ENCODE measurements at regions of chr2 and their contacts with region 1.

Region 1: GRCh38 chr2:71068218-71069035 is at the start of gene NAGK:
- DNase-seq: peak; percentile 97 to 98 (median 98)
- H3K4me3 ChIP-seq: peak within 1 kb of the TSS; percentile 69 to 95 (median 89)
- H3K27ac ChIP-seq: peak within 1 kb of the TSS; percentile 89
- H3K4me1 ChIP-seq: peaks cover 32 to 84% (median 69%) of the 10 kb centered on the region in 4 experiments
- H3K27me3 ChIP-seq: no peaks in the 10 kb centered on the region

Region 2: GRCh38 chr2:71042287-71042686 is 26.1 kb before region 1 on chr2:
- CTCF ChIA-PET with region 1: no interaction called
- POLR2A ChIA-PET with region 1: no interaction called
- DNase-seq: no peak
- H3K4me3 ChIP-seq: no peak overlapping the region
- H3K27ac ChIP-seq: no peak overlapping the region
- H3K4me1 ChIP-seq: peaks cover 0 to 2% (median 0%) of the 10 kb centered on the region in 4 experiments
- H3K27me3 ChIP-seq: no peaks in the 10 kb centered on the region

Region 3: GRCh38 chr2:71100195-71100964 is 32.0 kb after region 1 on chr2:
- CTCF ChIA-PET with region 1: interaction called, 42 read pairs
- POLR2A ChIA-PET with region 1: interaction called, 7 read pairs
- DNase-seq: peak; percentile 56 to 68 (median 60)
- H3K4me3 ChIP-seq: no peak overlapping the region
- H3K27ac ChIP-seq: no peak overlapping the region
- H3K4me1 ChIP-seq: peaks cover 0 to 11% (median 6%) of the 10 kb centered on the region in 4 experiments
- H3K27me3 ChIP-seq: no peaks in the 10 kb centered on the region

Region 4: GRCh38 chr2:71130113-71130904 is 61.9 kb after region 1 on chr2 and contains the starts of genes MCEE and MPHOSPH10:
- CTCF ChIA-PET with region 1: interaction called, 19 read pairs
- POLR2A ChIA-PET with region 1: interaction called, 19 read pairs
- DNase-seq: peak; percentile 88 to 92 (median 90)
- H3K4me3 ChIP-seq: peak within 1 kb of the TSS; percentile 75 to 100 (median 96)
- H3K27ac ChIP-seq: peak within 1 kb of the TSS; percentile 85 to 93
- H3K4me1 ChIP-seq: peaks cover 10 to 30% (median 17%) of the 10 kb centered on the region in 4 experiments
- H3K27me3 ChIP-seq: no peaks in the 10 kb centered on the region